Mammary epithelial cell (primary cell): ENCODE measurements at regions of chr6 and their contacts with region 1.

Region 1: DNA sequence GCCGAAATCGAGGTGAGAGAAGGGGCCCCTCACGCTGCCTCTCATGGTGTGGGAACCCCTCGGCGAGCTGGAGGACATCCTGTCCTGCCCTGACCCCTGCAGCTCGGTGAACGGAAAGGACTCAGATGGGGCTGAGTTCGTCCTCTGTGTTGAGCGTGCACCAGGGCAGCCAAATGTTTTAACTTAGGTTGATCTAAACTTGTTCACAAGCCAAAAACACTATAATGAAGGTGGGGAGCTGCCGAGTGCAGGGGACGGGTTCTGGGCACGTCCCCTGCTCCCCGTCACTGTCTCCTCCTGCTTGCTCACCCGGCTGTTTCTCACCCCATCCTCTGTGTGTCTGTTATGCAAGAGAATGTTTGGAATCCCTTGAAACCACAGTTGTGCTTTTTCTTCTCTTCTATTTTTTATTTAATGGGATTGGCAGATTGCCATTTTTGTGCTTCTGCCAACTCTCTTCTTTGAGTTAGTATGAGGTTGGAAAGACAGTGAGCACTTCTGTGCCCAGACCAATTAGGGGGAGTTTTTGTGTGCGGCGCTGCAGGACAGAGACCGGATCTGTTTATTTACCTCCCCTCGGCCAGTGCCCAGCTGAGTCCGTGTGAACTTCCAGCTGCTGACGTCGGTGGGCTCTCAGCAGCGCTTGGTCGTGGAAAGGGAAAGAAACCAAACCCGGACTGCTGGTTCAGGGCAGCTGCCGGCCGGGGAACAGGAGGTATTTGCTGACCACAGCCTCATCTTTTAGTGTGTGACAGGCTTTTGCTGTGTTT is 158.1 kb downstream of the DTNBP1 start:
- DNase-seq: peak; percentile 92
- H3K4me3 ChIP-seq: peak overlapping the region in 1 of 3 experiments; percentile 14
- H3K27ac ChIP-seq: peak overlapping the region; percentile 20
- H3K4me1 ChIP-seq: peaks cover 19% of the 10 kb centered on the region
- H3K27me3 ChIP-seq: no peaks in the 10 kb centered on the region
- CTCF ChIP-seq: no peak

Region 2: GRCh38 chr6:15420959-15421438 is 83.8 kb before region 1 on chr6:
- CTCF ChIA-PET with region 1: no interaction called
- dilution Hi-C with region 1: loop called (anchors 5 kb)
- in situ Hi-C with region 1: no loop called
- intact Hi-C with region 1: no loop called
- DNase-seq: no peak
- H3K4me3 ChIP-seq: no peak overlapping the region
- H3K27ac ChIP-seq: no peak overlapping the region
- H3K4me1 ChIP-seq: peaks cover 16% of the 10 kb centered on the region
- H3K27me3 ChIP-seq: no peaks in the 10 kb centered on the region
- CTCF ChIP-seq: no peak

Region 3: GRCh38 chr6:15621203-15622044 is 116.7 kb after region 1 on chr6:
- CTCF ChIA-PET with region 1: no interaction called
- dilution Hi-C with region 1: no loop called
- in situ Hi-C with region 1: no loop called
- intact Hi-C with region 1: loop called (anchors 1 kb)
- DNase-seq: peak; percentile 73
- H3K4me3 ChIP-seq: no peak overlapping the region
- H3K27ac ChIP-seq: peak overlapping the region; percentile 43
- H3K4me1 ChIP-seq: peaks cover 15% of the 10 kb centered on the region
- H3K27me3 ChIP-seq: no peaks in the 10 kb centered on the region
- CTCF ChIP-seq: no peak